ENCODE measurements at regions of chrX and their contacts with region 1.

Region 1: GRCh38 chrX:49002091-49002935 is at the start of gene GRIPAP1:
- DNase-seq: peak; percentile 95 to 98 (median 96)
- H3K4me3 ChIP-seq: peak within 1 kb of the TSS; percentile 70 to 91 (median 80)
- H3K27ac ChIP-seq: peak within 1 kb of the TSS; percentile 99
- H3K4me1 ChIP-seq: peaks cover 0 to 7% (median 2%) of the 10 kb centered on the region in 4 experiments
- H3K27me3 ChIP-seq: no peaks in the 10 kb centered on the region

Region 2: DNA sequence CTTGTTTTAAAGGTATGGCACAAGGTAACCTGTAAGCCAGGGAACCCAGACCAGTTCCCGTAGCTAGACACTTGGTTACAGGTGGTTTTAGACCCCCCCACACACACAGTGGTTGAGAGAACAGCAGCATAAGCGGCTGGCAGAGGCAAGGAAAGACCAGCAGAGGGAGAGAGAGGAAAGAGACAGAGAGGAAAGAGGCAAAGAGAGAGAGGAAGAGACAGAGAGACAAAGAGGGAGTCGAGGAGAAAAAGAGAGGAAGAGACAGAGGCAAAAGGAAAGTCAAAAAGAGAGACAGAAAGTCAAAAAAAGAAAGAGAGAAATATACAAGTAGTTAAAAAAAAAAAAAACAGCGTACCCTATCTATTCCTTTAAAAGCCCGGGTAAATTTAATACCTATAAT is 147.4 kb before region 1 on chrX:
- CTCF ChIA-PET with region 1: no interaction called
- POLR2A ChIA-PET with region 1: no interaction called
- DNase-seq: peak in 1 of 3 donors; percentile 15
- H3K4me3 ChIP-seq: no peak overlapping the region
- H3K27ac ChIP-seq: no peak overlapping the region
- H3K4me1 ChIP-seq: no peaks in the 10 kb centered on the region
- H3K27me3 ChIP-seq: no peaks in the 10 kb centered on the region

Region 3: DNA sequence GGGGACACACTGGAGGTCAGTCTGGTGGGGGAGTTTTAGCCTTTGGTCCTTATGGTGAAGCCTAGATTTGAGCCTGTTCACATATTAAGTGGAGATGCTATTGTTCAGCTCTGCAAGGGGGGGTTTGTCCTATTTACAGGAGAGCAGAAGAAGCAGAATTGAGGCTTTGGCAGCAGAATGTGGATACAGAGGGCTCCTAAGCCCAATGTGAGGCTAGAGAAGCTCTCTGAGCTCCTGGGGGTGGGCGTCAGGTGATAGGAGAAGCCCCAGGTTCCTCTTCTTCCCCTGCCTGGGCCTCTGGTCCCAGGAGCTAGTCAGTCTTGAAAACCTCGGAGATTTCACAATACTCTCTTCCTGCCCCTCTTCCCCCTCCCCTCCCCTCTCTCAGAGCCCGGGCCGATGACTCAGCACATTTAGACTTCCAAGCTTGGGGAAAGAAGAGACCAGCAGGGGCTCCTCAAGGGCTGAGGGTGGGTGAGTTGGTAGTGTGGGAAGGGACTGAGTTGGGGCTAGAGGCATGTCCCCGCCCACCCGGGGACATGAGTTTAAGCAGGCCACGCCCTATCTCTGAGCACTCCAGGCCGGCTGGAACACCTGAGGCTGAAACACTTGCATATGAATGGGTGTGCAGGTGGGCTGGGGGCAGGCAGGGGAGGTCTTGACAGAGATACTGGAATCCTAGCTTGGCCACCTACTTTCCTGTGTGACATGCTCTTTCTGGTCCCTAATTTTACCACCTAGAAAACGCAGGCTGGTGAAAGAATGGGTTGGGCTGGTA is 37.5 kb after region 1 on chrX:
- CTCF ChIA-PET with region 1: no interaction called
- POLR2A ChIA-PET with region 1: interaction called, 10 read pairs
- DNase-seq: peak; percentile 94 to 97 (median 97)
- H3K4me3 ChIP-seq: peak overlapping the region in 5 of 7 experiments; percentile 10 to 54 (median 34)
- H3K27ac ChIP-seq: peak overlapping the region; percentile 29 to 79
- H3K4me1 ChIP-seq: peaks cover 6 to 44% (median 36%) of the 10 kb centered on the region in 4 experiments
- H3K27me3 ChIP-seq: no peaks in the 10 kb centered on the region

Measured in common myeloid progenitor, CD34-positive (primary cell).